Dorsolateral prefrontal cortex (tissue), 120 donors: ENCODE measurements at regions of chr4 and their contacts with region 1.

Region 1: GRCh38 chr4:181143250-181143854 is 1099.8 kb upstream of the TENM3 start:
- DNase-seq: peak; percentile 78 to 95 (median 84)
- H3K4me3 ChIP-seq: no peak overlapping the region
- H3K27ac ChIP-seq: no peak overlapping the region
- H3K27me3 ChIP-seq: peaks cover 0 to 40% (median 3%) of the 10 kb centered on the region in 45 donors
- CTCF ChIP-seq: peak; percentile 89 to 100 (median 96)

Region 2: GRCh38 chr4:180828440-180829018 is 314.8 kb before region 1 on chr4:
- intact Hi-C with region 1: loop called in 1 of 2 experiments (anchors 5 kb)
- DNase-seq: peak in 3 of 10 donors; percentile 14 to 68 (median 17)
- H3K4me3 ChIP-seq: peak overlapping the region in 6 of 59 donors; percentile 39 to 68 (median 58)
- H3K27ac ChIP-seq: no peak overlapping the region
- H3K27me3 ChIP-seq: peaks cover 0 to 3% (median 0%) of the 10 kb centered on the region in 45 donors
- CTCF ChIP-seq: peak; percentile 58 to 99 (median 81)

Region 3: DNA sequence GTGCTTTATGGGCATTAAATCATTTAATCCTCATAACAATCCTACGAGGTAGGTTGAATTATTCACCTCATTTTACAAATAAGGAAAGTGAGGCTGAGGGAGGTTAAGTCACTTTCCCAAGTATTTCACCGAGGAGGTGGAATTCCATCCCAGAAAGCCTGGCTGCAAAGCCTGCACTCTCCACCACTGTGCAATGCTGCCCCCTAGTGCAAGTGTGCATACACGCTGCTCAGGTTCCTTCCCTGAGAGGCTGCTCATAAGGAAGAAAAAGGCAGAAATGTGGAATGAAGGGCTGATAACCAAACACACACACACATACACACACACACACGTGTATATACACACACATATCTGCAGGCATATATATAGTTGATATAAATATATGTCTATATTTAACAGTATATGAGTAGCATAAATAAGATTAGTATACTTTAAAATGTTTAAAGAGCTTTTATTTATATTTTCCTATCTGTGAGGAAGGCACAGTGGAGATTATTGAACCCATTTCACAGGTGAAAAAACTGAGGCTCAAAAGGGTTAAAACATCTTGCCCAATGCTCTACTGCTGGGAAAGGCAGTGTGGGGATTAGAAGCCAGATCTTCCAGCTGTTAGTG is 385.3 kb after region 1 on chr4:
- intact Hi-C with region 1: loop called (anchors 1 to 5 kb)
- DNase-seq: peak; percentile 34 to 79 (median 72)
- H3K4me3 ChIP-seq: no peak overlapping the region
- H3K27ac ChIP-seq: no peak overlapping the region
- H3K27me3 ChIP-seq: peaks cover 0 to 47% (median 4%) of the 10 kb centered on the region in 45 donors
- CTCF ChIP-seq: peak; percentile 63 to 94 (median 86)

Region 4: DNA sequence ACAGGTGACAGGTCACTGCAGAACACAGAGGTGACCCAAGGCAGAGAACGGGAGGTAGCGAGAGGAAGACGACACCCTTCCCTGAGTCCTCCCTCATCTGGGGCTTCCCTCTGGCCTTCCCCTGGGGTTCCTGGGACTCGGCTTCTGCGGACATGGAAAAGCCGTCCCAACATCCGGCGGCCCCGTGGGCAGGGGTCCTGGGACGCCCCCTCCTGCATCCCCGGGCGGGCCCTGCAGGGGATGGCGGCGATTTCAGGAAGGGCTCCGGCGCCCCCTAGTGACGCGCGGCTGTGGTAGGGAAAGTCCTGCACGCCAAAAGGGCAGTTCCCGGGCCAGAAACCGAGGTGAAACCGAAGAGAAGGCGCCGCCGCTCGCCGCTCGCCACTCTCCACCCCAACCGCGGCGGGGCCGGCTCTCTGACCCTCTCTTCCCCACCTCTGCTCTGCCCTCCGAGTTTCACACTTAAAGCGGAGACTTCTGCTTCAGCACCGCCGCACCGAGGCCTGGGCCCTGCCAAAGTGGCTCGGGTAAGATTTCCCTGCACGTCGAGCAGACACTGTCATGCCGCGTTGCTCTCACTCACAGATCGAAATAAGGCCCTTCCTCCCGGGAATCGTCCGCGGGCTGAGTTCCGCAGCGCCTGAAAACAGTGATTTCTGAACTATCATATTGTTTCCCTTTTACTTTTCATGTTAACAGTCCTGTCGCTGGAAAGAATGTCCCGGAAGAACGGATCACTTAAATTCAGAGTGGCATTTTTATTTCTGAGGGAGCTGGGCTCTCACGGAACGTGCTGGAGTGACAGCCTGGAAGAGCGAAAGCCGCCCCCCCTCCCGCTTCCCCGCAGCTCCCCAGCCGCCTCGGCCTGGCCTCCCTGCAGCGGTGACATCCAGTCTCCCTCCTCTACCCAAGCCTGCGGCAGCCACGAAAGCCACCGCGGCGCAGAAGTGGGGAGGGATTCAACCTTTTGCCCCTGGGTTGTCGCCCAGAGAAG is 1663.2 kb after region 1 on chr4:
- intact Hi-C with region 1: loop called (anchors 10 kb)
- DNase-seq: peak; percentile 58 to 84 (median 68)
- H3K4me3 ChIP-seq: peak overlapping the region; percentile 34 to 75 (median 58)
- H3K27ac ChIP-seq: peak overlapping the region in 7 of 59 donors; percentile 38 to 73 (median 50)
- H3K27me3 ChIP-seq: peaks cover 0 to 4% (median 0%) of the 10 kb centered on the region in 45 donors
- CTCF ChIP-seq: peak; percentile 58 to 97 (median 86)

Region 5: GRCh38 chr4:182925298-182925738 is 1782.0 kb after region 1 on chr4:
- intact Hi-C with region 1: loop called in 1 of 2 experiments (anchors 10 kb)
- DNase-seq: peak in 9 of 10 donors; percentile 48 to 72 (median 61)
- H3K4me3 ChIP-seq: no peak overlapping the region
- H3K27ac ChIP-seq: no peak overlapping the region
- H3K27me3 ChIP-seq: no peaks in the 10 kb centered on the region
- CTCF ChIP-seq: peak in 55 of 56 donors; percentile 14 to 89 (median 69)